ENCODE measurements at regions of chrX and their contacts with region 1.

Region 1: GRCh38 chrX:136214551-136214950 is 36.6 kb downstream of the MAP7D3 start:
- DNase-seq: no peak
- H3K4me3 ChIP-seq: no peak overlapping the region
- H3K27ac ChIP-seq: no peak overlapping the region
- H3K4me1 ChIP-seq: peaks cover 0 to under 1% of the 10 kb centered on the region in 2 donors
- H3K27me3 ChIP-seq: no peaks in the 10 kb centered on the region
- CTCF ChIP-seq: no peak

Region 2: GRCh38 chrX:135009057-135009610 is 1205.4 kb before region 1 on chrX:
- intact Hi-C with region 1: no loop called
- DNase-seq: no peak
- H3K4me3 ChIP-seq: no peak overlapping the region
- H3K27ac ChIP-seq: no peak overlapping the region
- H3K4me1 ChIP-seq: no peaks in the 10 kb centered on the region
- H3K27me3 ChIP-seq: no peaks in the 10 kb centered on the region
- CTCF ChIP-seq: no peak

Region 3: GRCh38 chrX:135931644-135932487 is 282.7 kb before region 1 on chrX:
- intact Hi-C with region 1: no loop called
- DNase-seq: peak in 1 of 2 donors; percentile 66
- H3K4me3 ChIP-seq: no peak overlapping the region
- H3K27ac ChIP-seq: no peak overlapping the region
- H3K4me1 ChIP-seq: no peaks in the 10 kb centered on the region
- H3K27me3 ChIP-seq: no peaks in the 10 kb centered on the region
- CTCF ChIP-seq: peak; percentile 15 to 65 (median 55)

Region 4: DNA sequence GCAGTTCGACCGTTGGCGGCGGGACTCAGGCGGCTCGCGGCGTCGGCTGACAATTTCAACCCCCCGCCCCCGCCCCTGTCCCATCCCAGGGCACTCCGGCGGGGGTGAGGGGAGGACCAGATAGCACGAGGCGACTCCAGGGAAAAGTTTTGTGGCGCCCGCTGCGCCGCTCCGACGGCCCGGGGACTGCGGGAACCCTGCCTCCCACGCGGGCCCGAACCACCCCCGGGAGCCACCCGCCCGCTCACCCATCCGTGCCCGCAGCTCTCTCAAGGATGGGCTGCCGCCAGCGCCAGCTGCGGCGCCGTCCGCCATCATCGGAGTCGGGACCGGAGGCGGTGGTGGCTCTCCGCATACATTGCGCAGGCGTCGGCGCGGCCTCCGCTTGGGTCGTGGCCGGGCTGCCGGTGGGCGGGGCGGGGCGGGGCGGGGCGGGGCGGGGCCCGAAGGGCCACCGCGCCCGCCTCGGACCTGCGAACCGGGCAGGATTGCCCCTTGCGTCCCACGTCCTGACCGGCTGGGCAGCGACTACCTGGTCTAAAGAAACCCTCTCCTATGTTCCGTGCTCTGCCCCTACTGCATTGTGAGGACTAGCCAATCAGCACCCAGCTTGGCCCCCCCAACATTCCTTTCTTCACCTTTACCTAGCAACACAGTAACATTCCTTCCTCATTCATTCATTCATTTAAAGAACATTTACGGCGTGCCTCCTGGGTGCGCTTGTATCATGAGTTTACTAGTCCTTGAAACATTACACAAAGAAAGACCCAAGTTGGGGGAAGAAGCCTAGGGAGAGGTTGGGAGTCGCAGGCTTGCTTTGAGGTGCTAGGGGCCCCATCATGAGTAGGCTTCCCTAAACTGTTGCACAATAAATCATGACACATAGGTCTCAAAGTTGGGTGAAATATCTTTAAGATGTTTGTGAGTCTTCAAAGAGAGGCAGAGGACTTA is 36.8 kb after region 1 on chrX and contains the start of gene MAP7D3:
- intact Hi-C with region 1: loop called (anchors 5 kb)
- DNase-seq: peak in 1 of 2 donors; percentile 75
- H3K4me3 ChIP-seq: peak within 1 kb of the TSS; percentile 68 to 78
- H3K27ac ChIP-seq: peak within 1 kb of the TSS; percentile 87 to 88
- H3K4me1 ChIP-seq: peaks cover 0 to under 1% of the 10 kb centered on the region in 2 donors
- H3K27me3 ChIP-seq: no peaks in the 10 kb centered on the region
- CTCF ChIP-seq: no peak
- total RNA-seq, gene MAP7D3: 7.9 TPM

Region 5: GRCh38 chrX:136268051-136269048 is 53.8 kb after region 1 on chrX:
- intact Hi-C with region 1: loop called (anchors 5 kb)
- DNase-seq: no peak
- H3K4me3 ChIP-seq: no peak overlapping the region
- H3K27ac ChIP-seq: no peak overlapping the region
- H3K4me1 ChIP-seq: no peaks in the 10 kb centered on the region
- H3K27me3 ChIP-seq: no peaks in the 10 kb centered on the region
- CTCF ChIP-seq: peak; percentile 32 to 80 (median 77)

Region 6: GRCh38 chrX:136417806-136418205 is 203.3 kb after region 1 on chrX:
- intact Hi-C with region 1: no loop called
- DNase-seq: no peak
- H3K4me3 ChIP-seq: no peak overlapping the region
- H3K27ac ChIP-seq: no peak overlapping the region
- H3K4me1 ChIP-seq: no peaks in the 10 kb centered on the region
- H3K27me3 ChIP-seq: no peaks in the 10 kb centered on the region
- CTCF ChIP-seq: no peak

Region 7: DNA sequence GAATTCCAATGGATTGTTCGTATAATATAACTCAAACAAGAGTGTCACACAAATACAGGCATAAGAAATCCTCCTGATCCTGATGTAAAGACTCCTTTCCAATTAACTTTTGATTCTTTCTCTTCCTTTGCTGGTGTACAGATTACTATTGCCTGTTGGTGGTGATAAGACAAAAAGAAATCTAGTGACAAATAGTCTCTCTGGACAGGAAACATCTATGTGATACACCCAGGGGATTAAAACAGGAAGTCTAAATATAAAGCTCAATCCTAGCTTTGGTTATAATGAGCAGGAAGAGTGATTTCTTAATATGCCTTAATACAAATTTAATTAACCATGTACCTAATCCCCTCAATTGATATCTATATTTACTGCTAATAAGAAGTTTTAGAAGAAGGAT is 521.0 kb after region 1 on chrX:
- intact Hi-C with region 1: no loop called
- DNase-seq: no peak
- H3K4me3 ChIP-seq: no peak overlapping the region
- H3K27ac ChIP-seq: no peak overlapping the region
- H3K4me1 ChIP-seq: no peaks in the 10 kb centered on the region
- H3K27me3 ChIP-seq: no peaks in the 10 kb centered on the region
- CTCF ChIP-seq: no peak

Measured in ascending aorta (tissue), 2 donors.